Activated CD4-positive, alpha-beta memory T cell treated with anti-CD3 and anti-CD28 coated beads, Interleukin-2, amount 10 ng/mL, durations not matched to agents 7 days and 5 days (primary cell): ENCODE measurements at regions of chr10 and their contacts with region 1.

Region 1: DNA sequence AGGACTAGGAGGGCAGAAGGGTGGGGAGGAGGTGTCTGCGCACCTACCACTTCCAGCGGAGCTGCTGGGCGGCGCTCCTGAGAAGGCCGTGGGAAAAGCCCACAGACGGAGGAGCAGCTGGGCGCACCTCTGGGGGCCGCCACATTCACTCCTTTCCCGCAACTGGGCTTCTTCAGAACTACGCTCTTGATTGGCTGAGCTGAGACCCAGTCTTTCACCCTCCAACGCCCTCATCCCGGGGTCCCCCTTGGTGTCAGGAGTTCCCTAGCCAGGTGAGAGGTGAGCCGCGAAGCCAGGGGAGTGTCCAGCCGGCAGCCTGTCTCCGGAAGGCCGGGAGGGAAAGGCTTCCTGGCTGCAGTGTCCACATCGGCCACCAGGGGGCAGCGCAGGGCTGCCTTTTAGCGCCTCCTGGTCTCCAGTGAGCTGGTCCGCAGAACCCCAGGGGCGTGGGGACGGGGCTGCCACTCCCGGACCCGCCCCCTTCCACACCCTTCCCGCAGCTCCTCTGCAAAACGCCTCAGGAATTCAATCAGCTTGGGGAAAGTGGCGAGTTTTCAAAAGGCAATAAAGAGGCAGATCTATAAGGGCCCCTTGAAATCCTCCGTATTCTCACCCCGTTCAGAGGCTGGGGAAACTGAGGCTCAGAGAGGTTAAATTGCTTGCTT is 98.8 kb downstream of the CHST15 start:
- DNase-seq: peak; percentile 80
- H3K4me3 Mint-ChIP-seq: no peak overlapping the region
- H3K27ac Mint-ChIP-seq: no peak overlapping the region
- H3K4me1 Mint-ChIP-seq: no peaks in the 10 kb centered on the region
- H3K27me3 Mint-ChIP-seq: peaks cover 51% of the 10 kb centered on the region

Region 2: GRCh38 chr10:124132876-124133275 is 138.3 kb after region 1 on chr10:
- CTCF ChIA-PET with region 1: interaction called, 15 read pairs
- POLR2A ChIA-PET with region 1: no interaction called
- DNase-seq: no peak
- H3K4me3 Mint-ChIP-seq: no peak overlapping the region
- H3K27ac Mint-ChIP-seq: no peak overlapping the region
- H3K4me1 Mint-ChIP-seq: no peaks in the 10 kb centered on the region
- H3K27me3 Mint-ChIP-seq: peaks cover 8% of the 10 kb centered on the region

Region 3: GRCh38 chr10:124224311-124225028 is 229.9 kb after region 1 on chr10:
- CTCF ChIA-PET with region 1: interaction called, 22 read pairs
- POLR2A ChIA-PET with region 1: interaction called, 3 read pairs
- DNase-seq: no peak
- H3K4me3 Mint-ChIP-seq: no peak overlapping the region
- H3K27ac Mint-ChIP-seq: no peak overlapping the region
- H3K4me1 Mint-ChIP-seq: peaks cover 14% of the 10 kb centered on the region
- H3K27me3 Mint-ChIP-seq: no peaks in the 10 kb centered on the region

Region 4: DNA sequence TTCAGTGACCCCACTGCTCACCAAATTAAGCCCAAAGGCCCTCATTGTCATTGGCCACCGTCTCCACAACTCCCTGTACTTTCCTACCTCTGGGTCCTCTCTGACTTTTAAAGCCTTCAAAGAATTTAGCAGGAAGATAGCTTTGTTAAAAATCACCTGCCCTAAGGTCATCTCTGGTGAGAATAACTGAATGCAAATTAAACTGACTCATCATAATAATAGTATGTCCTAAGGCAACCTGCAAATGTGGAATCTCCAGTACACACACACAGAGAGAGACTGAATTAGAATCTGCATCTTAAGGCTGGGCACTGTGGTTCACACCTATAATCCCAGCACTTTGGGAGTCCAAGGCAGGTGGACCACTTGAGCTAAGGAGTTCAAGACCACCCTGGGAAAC is 400.0 kb after region 1 on chr10:
- CTCF ChIA-PET with region 1: interaction called, 164 read pairs
- POLR2A ChIA-PET with region 1: interaction called, 5 read pairs
- DNase-seq: no peak
- H3K4me3 Mint-ChIP-seq: no peak overlapping the region
- H3K27ac Mint-ChIP-seq: no peak overlapping the region
- H3K4me1 Mint-ChIP-seq: peaks cover under 1% of the 10 kb centered on the region
- H3K27me3 Mint-ChIP-seq: no peaks in the 10 kb centered on the region

Region 5: DNA sequence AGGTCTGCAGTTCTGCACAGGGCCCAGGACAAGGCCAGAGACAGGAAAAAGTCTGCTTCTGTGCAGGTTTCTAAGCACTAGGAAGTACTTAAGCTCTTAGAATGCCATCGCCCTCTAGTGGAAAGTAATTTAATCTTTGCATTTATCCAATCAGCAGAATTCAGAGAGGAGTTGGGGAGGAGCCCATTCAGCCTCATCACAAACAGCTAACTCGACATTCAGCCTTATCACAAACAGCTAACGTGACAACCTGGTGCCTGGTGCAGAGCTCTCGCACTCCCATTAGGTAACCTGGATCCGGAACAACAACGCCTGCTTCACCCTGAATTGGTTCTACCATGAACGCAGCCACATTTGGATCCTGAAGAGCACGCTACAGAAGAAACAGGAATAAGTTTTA is 409.0 kb after region 1 on chr10:
- CTCF ChIA-PET with region 1: interaction called, 15 read pairs
- POLR2A ChIA-PET with region 1: no interaction called
- DNase-seq: peak; percentile 36
- H3K4me3 Mint-ChIP-seq: no peak overlapping the region
- H3K27ac Mint-ChIP-seq: peak overlapping the region; percentile 55
- H3K4me1 Mint-ChIP-seq: peaks cover 9% of the 10 kb centered on the region
- H3K27me3 Mint-ChIP-seq: no peaks in the 10 kb centered on the region